ENCODE measurements at regions of chr14 and their contacts with region 1.

Region 1: DNA sequence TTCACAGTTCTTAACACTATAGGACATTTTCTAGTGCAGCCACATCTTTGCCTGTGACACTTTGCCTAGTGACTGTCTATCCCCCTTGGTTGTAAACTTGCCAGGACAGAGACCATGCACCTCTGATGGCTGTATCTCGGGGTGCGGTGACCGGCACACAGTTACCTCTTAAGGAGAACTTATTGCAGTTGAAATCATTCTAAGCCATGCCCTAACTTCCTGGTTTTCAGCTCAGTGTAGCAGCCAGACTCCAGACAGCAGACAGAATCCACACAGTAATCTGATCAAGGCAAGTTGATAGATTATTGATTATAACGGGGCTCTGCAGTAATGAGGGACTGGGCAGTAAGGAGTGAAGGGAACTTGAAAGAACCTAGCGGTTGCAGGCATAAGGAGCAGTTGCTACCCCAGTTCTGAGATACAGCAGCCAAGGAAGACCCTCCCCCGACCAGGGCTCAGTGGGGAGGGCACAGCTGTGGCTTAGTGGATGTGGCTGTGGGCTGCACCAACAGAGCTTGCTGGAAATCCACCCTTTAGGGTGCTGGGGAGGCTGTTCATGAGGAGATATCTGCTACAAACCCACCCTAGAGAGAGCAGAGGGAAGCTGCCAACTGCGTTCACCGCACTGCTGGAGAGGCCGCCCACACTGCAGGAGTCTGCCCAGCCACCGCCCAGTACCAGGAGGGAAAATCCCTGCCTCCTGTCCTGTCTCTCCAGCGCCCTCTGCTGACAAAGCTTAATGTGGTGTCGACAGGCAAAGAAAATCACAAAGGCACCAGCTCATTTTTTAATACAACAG is 58.2 kb upstream of the BEGAIN start:
- DNase-seq: peak; percentile 75 to 87 (median 76)
- H3K4me3 ChIP-seq: no peak overlapping the region
- H3K4me3 Mint-ChIP-seq: peak overlapping the region in 5 of 7 donors; percentile 13 to 56 (median 36)
- H3K27ac ChIP-seq: peak overlapping the region; percentile 2
- H3K27ac Mint-ChIP-seq: peak overlapping the region in 5 of 8 donors; percentile 4 to 48 (median 24)
- H3K4me1 ChIP-seq: peaks cover 33% of the 10 kb centered on the region
- H3K4me1 Mint-ChIP-seq: peaks cover 42 to 55% (median 55%) of the 10 kb centered on the region in 3 donors
- H3K27me3 ChIP-seq: no peaks in the 10 kb centered on the region
- H3K27me3 Mint-ChIP-seq: peaks cover 0 to 5% of the 10 kb centered on the region in 2 donors

Region 2: DNA sequence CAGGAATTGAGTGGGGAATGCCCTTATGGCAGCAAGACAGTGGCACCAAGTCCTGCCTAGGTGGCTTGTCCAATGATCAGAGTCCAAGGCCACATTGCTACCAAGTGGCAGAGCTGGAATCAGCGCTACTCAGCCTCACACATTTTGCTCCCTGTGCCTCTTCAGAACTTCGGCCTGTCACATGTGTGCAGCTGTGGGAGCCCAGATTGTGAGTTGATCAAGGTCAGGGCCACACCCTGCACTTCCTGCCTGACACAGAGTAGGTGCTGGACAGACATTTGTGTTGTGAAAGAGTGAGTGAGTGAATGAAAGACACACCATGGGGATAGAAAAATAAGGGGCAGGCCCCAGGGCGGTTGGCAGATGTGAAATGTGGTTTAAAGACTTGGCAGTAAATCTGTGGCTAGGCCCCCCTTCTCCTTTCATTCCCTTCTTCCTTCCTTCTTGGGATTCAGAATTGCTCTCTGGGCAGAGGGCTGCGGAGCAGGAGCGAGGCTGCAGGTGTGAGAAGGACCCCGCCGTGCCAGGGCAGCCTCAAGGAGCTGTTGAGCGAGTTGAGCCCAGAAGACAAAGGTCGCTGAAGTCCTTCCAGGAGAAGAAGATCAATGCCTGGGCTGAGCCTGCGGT is 238.8 kb before region 1 on chr14:
- CTCF ChIA-PET with region 1: interaction called, 23 read pairs
- POLR2A ChIA-PET with region 1: no interaction called
- DNase-seq: peak in 3 of 5 donors; percentile 20 to 57 (median 26)
- H3K4me3 ChIP-seq: peak overlapping the region; percentile 23
- H3K4me3 Mint-ChIP-seq: peak overlapping the region; percentile 5 to 70 (median 60)
- H3K27ac ChIP-seq: peak overlapping the region; percentile 48
- H3K27ac Mint-ChIP-seq: peak overlapping the region; percentile 50 to 97 (median 85)
- H3K4me1 ChIP-seq: peaks cover 25% of the 10 kb centered on the region
- H3K4me1 Mint-ChIP-seq: peaks cover 44 to 61% (median 49%) of the 10 kb centered on the region in 3 donors
- H3K27me3 ChIP-seq: no peaks in the 10 kb centered on the region
- H3K27me3 Mint-ChIP-seq: peaks cover 0 to 1% of the 10 kb centered on the region in 2 donors

Region 3: GRCh38 chr14:100537446-100538350 is 107.7 kb before region 1 on chr14:
- CTCF ChIA-PET with region 1: interaction called, 4 read pairs
- POLR2A ChIA-PET with region 1: interaction called, 11 read pairs
- DNase-seq: peak in 1 of 5 donors; percentile 46
- H3K4me3 ChIP-seq: no peak overlapping the region
- H3K4me3 Mint-ChIP-seq: peak overlapping the region in 1 of 7 donors; percentile 40
- H3K27ac ChIP-seq: no peak overlapping the region
- H3K27ac Mint-ChIP-seq: peak overlapping the region in 1 of 8 donors; percentile 17
- H3K4me1 ChIP-seq: no peaks in the 10 kb centered on the region
- H3K4me1 Mint-ChIP-seq: peaks cover 0 to 4% (median 0%) of the 10 kb centered on the region in 3 donors
- H3K27me3 ChIP-seq: no peaks in the 10 kb centered on the region
- H3K27me3 Mint-ChIP-seq: no peaks in the 10 kb centered on the region

Region 4: DNA sequence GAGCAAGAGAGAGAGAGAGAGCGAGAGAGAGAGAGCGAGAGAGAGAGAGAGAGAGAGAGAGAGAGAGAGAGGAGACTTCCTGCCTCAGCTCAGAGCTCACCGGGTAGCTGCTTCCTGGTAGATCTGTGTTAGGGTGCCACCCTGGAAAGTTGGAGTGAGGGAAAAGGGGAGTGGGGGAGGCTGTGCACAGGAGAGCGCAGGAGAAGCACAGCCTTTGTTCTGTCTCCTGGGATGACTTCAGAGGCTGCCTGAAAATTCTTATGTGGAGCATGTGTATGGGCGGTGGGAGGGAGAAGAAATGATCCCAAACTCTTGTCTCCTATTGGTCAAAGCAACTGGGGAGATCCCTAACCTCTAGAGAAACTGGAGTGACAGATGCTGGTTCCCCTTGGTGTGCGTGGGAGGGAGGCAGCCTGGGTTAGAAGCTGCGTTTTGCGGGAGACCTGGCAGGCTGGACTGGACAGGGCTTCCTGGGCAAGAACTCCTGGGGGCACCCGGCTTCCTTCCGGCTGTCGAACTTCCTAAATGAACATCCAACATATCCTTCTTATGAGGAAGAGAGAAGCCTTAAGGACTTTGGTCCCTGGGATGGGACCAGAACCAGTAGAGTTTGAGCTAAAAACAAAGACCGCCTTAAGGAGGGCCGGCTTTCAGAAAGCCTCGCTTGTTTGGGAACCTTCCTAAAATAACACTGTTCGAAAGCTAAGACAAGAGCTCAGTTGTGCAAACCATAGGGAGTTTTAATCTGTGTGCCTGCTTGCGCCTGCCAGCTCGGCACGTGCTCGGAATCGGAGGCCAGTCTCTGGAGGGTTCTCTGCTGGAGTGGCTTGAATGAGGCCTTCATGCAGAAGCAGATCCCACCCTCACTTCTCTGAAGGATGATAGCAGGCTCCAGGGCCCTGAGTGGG is 27.7 kb before region 1 on chr14:
- CTCF ChIA-PET with region 1: interaction called, 14 read pairs
- POLR2A ChIA-PET with region 1: no interaction called
- DNase-seq: peak in 2 of 5 donors; percentile 28 to 33
- H3K4me3 ChIP-seq: no peak overlapping the region
- H3K4me3 Mint-ChIP-seq: peak overlapping the region in 6 of 7 donors; percentile 9 to 78 (median 62)
- H3K27ac ChIP-seq: no peak overlapping the region
- H3K27ac Mint-ChIP-seq: peak overlapping the region; percentile 37 to 88 (median 68)
- H3K4me1 ChIP-seq: peaks cover 18% of the 10 kb centered on the region
- H3K4me1 Mint-ChIP-seq: peaks cover 20 to 25% (median 23%) of the 10 kb centered on the region in 3 donors
- H3K27me3 ChIP-seq: no peaks in the 10 kb centered on the region
- H3K27me3 Mint-ChIP-seq: peaks cover 4 to 8% of the 10 kb centered on the region in 2 donors